ENCODE measurements at regions of chr20 and their contacts with region 1.

Region 1: DNA sequence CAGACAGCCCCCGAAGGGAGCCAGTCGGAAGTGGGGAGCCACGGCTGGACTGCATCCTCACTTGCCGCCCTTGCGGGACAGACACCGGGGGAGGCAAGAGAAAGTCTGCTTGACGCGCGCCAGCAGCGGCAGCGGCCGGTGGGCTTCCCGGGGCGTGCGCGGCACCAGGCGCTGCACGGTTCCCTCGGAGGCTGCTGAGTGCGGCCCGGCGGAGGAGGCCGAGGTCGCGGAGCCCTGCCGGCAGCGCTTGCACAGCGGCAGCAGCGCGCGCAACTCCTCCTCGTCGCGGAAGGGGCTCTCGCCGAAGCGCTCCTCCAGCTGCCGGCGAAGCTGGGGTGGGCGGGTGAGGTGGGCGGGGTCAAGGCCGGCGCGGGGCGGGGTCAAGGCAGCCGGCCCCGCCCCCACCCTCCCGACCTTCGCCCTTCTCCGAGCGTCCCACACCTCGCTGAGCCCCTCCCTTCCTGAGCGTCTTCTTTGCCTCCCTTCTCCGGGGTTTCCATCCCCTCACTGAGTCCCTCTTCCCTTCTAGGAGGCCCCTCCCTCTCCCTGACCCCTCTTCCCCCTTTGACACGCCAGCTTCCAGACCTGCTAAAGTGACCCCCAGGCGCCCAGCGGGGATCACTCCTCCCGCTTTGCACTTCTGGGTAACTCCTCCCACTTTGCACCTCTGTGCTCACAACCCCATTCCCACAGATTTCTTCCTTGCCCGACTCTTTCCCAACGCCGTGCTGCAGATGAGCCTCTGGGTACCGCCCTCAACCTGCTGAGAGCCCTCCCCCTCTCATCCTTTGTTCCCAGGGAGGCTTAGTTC is 8.8 kb downstream of the DUSP15 start:
- DNase-seq: peak in 1 of 2 donors; percentile 63
- H3K4me3 ChIP-seq: peak overlapping the region; percentile 58 to 69
- H3K27ac ChIP-seq: no peak overlapping the region
- H3K4me1 ChIP-seq: peaks cover 9 to 10% of the 10 kb centered on the region in 2 donors
- H3K27me3 ChIP-seq: no peaks in the 10 kb centered on the region
- CTCF ChIP-seq: no peak

Region 2: GRCh38 chr20:31918466-31919105 is 57.0 kb after region 1 on chr20:
- intact Hi-C with region 1: loop called (anchors 5 kb)
- DNase-seq: no peak
- H3K4me3 ChIP-seq: no peak overlapping the region
- H3K27ac ChIP-seq: no peak overlapping the region
- H3K4me1 ChIP-seq: no peaks in the 10 kb centered on the region
- H3K27me3 ChIP-seq: no peaks in the 10 kb centered on the region
- CTCF ChIP-seq: no peak

Region 3: DNA sequence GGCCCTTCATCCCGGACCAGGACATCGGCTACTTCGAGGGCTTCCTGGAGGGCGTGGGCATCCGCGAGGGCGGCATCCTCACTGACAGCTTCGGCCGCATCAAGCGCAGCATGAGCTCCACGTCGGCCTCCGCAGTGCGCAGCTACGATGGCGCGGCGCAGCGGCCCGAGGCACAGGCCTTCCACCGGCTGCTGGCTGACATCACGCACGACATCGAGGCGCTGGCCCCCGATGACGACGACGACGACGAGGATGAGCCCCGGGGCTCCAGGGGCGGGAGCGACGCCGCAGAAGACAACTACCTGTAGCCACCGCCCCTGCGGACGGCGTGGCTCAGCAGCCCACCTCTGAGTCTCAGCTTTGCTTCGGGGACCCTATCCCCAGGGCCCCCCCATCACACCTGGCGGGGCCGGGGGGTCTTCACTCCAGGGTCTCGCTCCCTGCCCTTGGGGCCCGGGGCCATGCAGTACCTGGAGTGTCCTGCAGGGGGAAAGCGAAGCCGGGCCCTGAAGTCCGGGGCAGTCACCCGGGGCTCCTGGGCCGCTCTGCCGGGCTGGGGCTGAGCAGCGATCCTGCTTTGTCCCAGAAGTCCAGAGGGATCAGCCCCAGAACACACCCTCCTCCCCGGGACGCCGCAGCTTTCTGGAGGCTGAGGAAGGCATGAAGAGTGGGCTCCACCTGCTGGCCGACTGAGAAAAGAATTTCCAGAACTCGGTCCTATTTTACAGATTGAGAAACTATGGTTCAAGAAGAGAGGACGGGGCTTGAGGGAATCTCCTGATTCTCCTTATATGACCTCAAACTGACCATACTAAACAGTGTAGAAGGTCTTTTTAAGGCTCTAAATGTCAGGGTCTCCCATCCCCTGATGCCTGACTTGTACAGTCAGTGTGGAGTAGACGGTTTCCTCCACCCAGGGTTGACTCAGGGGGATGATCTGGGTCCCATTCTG is 169.7 kb after region 1 on chr20:
- intact Hi-C with region 1: loop called (anchors 10 kb)
- DNase-seq: peak in 1 of 2 donors; percentile 78
- H3K4me3 ChIP-seq: peak overlapping the region; percentile 10 to 52
- H3K27ac ChIP-seq: no peak overlapping the region
- H3K4me1 ChIP-seq: peaks cover 3 to 8% of the 10 kb centered on the region in 2 donors
- H3K27me3 ChIP-seq: no peaks in the 10 kb centered on the region
- CTCF ChIP-seq: peak; percentile 73 to 82 (median 74)

Region 4: DNA sequence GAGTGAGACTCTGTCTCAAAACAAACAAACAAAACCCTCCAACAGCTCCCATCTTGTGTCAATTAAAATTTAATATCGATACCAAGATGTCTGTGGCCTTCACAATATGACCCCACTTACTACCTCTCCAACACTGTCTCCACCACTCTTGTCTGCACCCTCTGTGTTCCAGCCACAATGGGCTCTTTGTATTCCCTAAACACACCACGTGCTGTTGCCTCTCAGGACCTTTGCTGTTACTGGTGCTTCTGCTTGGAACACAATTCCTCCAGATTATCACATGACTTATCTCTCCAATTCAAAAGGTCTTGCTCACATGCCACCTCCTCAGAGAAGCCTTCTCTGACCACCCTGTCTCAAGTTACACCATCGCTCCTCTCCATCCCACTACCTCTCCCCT is 184.4 kb after region 1 on chr20:
- intact Hi-C with region 1: no loop called
- DNase-seq: no peak
- H3K4me3 ChIP-seq: no peak overlapping the region
- H3K27ac ChIP-seq: no peak overlapping the region
- H3K4me1 ChIP-seq: no peaks in the 10 kb centered on the region
- H3K27me3 ChIP-seq: no peaks in the 10 kb centered on the region
- CTCF ChIP-seq: no peak